ENCODE measurements at regions of chrX and their contacts with region 1.

Region 1: DNA sequence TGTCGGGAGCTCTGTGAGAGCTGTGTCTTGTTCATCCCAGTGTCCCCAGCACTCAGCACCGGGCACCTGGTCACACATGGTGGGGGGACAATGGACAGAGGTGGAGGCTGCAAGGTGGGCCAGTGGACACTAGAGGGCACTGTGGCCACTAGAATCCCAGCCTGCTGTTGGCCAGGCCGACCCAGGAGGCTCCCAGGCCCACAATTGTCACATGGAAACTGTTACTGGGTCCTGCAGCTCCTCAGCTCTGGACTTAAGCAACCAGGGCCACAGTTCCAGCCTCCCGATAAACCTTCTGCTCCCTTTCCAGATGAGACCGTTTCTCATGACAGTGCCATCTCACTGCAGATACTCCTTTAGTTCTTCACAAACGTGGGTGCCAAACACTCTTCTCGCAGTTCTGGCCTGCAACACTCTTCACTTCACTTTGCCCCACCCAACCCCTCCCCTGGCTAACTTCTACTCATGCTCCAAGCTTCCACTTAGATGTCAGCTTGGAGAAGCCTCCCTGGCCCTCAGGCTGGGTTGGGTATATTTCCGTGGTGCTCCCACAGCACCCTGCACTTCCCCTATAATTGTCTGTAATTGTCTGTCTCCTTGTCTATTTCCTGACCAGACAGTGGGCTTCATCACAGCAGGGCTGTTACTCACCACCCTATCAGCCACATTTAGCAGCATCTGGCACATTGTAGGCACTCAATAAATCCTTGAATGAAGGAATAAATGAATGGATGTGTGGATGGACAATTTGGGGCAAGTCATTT is 3.5 kb upstream of the IQSEC2 start:
- DNase-seq: peak; percentile 48 to 60
- ATAC-seq: peak; percentile 32 to 62; a peak in 4 of 6 replicates
- H3K4me3 ChIP-seq: no peak overlapping the region
- H3K27ac ChIP-seq: peak overlapping the region; percentile 50 to 62; a peak in 5 of 6 replicates
- H3K4me1 ChIP-seq: peaks cover 45% of the 10 kb centered on the region
- CTCF ChIP-seq: peak; percentile 62
- EP300 ChIP-seq: no peak
- POLR2A ChIP-seq: no peak
- RAD21 ChIP-seq: peak; percentile 65 to 67

Region 2: DNA sequence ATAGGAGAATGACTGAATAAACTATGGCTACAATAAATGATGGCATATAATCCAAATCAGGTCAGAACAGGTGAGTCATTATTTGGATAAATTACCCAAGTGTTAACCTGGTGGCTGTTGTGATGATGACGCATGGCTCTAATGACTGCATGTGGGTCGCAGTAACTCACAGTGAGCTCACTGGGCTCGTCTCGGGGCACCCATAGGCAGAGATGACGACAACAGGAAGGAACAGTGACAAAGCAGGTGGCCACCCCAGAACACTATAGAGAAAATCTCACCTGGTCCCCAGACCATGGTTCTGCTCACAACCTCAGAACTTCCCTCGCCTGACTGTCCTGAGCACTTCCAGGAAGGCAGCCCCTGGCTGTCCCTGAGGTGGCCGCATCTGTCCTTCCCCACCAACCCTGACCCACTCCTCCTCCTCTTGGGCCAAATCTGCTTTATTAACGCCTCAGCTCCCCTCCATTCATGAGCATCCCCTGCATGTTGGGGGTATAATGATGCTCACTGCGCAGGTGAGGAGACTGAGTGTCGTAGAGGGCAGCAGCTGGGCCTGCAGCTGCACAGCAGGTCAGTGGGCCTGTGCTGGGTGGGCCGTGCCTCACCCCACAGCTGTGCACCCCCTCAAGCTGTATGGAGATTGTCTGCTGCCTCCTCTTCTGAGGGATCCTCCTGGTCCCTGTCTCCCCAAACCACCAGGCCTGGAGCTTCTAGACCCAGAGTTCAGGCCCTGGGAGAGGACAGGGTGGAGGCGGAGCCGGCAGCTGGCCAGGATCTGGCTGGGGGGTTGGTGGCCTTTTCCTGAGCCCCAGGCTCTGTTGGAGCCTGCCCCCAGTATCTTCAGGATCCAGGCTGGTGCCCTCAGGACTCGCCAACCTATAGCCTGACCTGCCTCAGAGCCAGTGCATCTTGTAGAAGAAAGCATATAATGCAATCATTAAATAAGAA is 295.6 kb before region 1 on chrX:
- CTCF ChIA-PET with region 1: no interaction called
- POLR2A ChIA-PET with region 1: no interaction called
- DNase-seq: no peak
- ATAC-seq: peak in 1 of 2 experiments; percentile 32; a peak in 3 of 6 replicates
- H3K4me3 ChIP-seq: no peak overlapping the region
- H3K27ac ChIP-seq: no peak overlapping the region
- H3K4me1 ChIP-seq: peaks cover 4% of the 10 kb centered on the region; the same call in 1 of the 3 replicates
- CTCF ChIP-seq: no peak
- EP300 ChIP-seq: no peak
- POLR2A ChIP-seq: no peak
- RAD21 ChIP-seq: no peak

Region 3: GRCh38 chrX:53251307-53251706 is 33.6 kb before region 1 on chrX:
- CTCF ChIA-PET with region 1: interaction called, 26 read pairs
- POLR2A ChIA-PET with region 1: no interaction called
- DNase-seq: no peak
- ATAC-seq: no peak
- H3K4me3 ChIP-seq: no peak overlapping the region
- H3K27ac ChIP-seq: peak overlapping the region in 1 of 2 experiments; percentile 67; a peak in 1 of 6 replicates
- H3K4me1 ChIP-seq: peaks cover 15% of the 10 kb centered on the region; the same call in 2 of the 3 replicates
- CTCF ChIP-seq: no peak
- EP300 ChIP-seq: no peak
- POLR2A ChIP-seq: no peak
- RAD21 ChIP-seq: no peak

Region 4: DNA sequence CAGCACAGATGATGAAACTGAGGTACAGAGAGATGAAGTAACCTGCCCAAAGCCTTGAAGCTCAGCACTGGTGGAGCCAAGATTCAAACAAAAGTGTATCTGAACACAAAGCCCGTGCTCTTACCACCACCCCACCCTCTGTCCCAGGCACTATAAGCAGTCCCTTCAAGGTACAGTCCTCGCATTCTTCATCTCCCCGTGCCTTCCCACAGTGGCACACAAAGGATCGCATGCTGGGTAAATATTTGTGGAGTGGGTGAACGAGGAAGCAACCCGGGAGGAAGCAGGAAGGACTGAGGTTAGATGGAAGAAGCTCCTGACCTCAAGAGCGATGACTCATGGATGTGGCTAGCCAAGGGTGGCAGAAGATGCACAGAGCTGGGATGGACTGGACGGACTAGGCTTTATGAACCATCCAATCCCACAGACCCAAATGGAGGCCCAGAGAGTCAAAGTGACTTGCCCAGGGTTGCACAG is 21.9 kb before region 1 on chrX:
- CTCF ChIA-PET with region 1: interaction called, 13 read pairs
- POLR2A ChIA-PET with region 1: interaction called, 4 read pairs
- DNase-seq: peak; percentile 61 to 78
- ATAC-seq: peak; percentile 72 to 82
- H3K4me3 ChIP-seq: peak overlapping the region; percentile 32; the same call in 1 of the 3 replicates
- H3K27ac ChIP-seq: peak overlapping the region; percentile 92 to 99
- H3K4me1 ChIP-seq: peaks cover 71% of the 10 kb centered on the region
- CTCF ChIP-seq: no peak
- EP300 ChIP-seq: peak in 1 of 2 experiments; percentile 16; a peak in 1 of 5 replicates
- POLR2A ChIP-seq: no peak
- RAD21 ChIP-seq: no peak

Region 5: DNA sequence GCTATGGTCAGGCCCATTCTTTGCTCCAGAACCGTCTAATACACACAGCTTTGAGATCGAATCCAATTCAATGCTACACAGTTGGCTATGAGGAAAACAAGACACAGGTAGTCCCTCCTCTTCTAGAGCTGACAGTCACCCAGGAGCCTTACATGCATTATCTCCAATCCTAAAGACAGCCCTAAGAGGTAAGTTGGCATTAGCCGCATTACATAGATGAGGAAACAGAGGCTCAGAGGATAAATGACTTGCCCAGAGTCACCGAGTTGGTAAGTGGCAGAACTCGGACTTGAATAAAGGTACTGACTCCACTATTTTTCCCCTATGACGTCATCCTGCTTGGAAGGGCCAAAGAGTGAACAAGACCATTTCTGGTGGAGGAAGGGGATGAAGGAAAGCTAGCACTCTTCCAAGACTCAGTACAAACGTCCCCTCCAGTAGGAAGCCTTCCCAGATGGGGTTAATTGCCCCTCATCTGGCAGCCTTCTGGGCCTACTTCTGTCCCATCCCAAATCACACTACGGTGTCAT is 12.0 kb before region 1 on chrX:
- CTCF ChIA-PET with region 1: interaction called, 18 read pairs
- POLR2A ChIA-PET with region 1: no interaction called
- DNase-seq: no peak
- ATAC-seq: no peak
- H3K4me3 ChIP-seq: no peak overlapping the region
- H3K27ac ChIP-seq: no peak overlapping the region
- H3K4me1 ChIP-seq: peaks cover 32% of the 10 kb centered on the region
- CTCF ChIP-seq: no peak
- EP300 ChIP-seq: no peak
- POLR2A ChIP-seq: no peak
- RAD21 ChIP-seq: no peak

Region 6: GRCh38 chrX:53441531-53442321 is 156.9 kb after region 1 on chrX:
- CTCF ChIA-PET with region 1: interaction called, 10 read pairs
- POLR2A ChIA-PET with region 1: no interaction called
- DNase-seq: peak; percentile 91
- ATAC-seq: peak; percentile 84 to 92
- H3K4me3 ChIP-seq: peak overlapping the region; percentile 46
- H3K27ac ChIP-seq: peak overlapping the region; percentile 90 to 95
- H3K4me1 ChIP-seq: peaks cover 11% of the 10 kb centered on the region
- CTCF ChIP-seq: no peak
- EP300 ChIP-seq: no peak
- POLR2A ChIP-seq: peak; percentile 73
- RAD21 ChIP-seq: no peak

Measured in A549 (cell line).